A673 (cell line): ENCODE measurements at regions of chr10 and their contacts with region 1.

Region 1: GRCh38 chr10:66931340-66931948 is 5.6 kb downstream of the LRRTM3 start:
- DNase-seq: peak; percentile 64
- H3K4me3 ChIP-seq: no peak overlapping the region
- H3K27ac ChIP-seq: no peak overlapping the region
- H3K4me1 ChIP-seq: no peaks in the 10 kb centered on the region
- H3K27me3 ChIP-seq: peaks cover 41% of the 10 kb centered on the region
- CTCF ChIP-seq: peak; percentile 87

Region 2: DNA sequence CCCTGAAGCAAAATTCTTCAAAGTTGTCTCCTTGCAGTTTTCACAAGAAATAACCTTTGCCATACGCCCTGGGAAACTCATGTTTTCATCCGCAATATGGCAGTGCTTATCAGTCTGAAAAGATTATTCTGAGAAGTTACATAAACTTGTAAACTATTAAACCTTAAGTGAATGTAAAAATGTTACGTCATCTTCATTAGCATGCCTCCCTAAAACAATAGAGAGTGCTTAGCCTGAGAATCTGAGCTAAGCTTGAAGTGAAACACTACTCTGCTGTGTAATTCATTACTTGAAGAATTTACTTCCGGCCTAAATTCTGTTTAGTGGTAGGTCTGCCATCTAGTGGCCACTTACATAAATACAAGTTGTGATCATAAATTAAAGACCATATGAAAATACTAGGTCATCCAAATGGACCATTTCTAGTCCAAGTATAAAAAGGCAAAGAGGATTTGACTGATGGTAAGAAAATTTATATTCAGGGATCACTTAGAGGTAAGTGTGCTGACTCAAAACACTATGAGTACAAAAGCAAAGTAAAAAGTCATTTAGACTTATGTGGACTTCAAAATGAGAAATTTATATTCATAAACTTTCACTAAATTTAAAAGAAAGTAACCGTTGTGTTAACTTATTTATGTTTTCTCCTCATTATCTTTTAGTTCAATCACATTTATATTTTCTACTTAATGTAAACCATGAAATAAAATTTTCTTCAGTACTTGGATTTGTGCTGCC is 750.7 kb before region 1 on chr10:
- CTCF ChIA-PET with region 1: no interaction called
- POLR2A ChIA-PET with region 1: no interaction called
- intact Hi-C with region 1: loop called (anchors 5 kb)
- DNase-seq: peak; percentile 69
- H3K4me3 ChIP-seq: no peak overlapping the region
- H3K27ac ChIP-seq: no peak overlapping the region
- H3K4me1 ChIP-seq: no peaks in the 10 kb centered on the region
- H3K27me3 ChIP-seq: no peaks in the 10 kb centered on the region
- CTCF ChIP-seq: peak; percentile 66

Region 3: GRCh38 chr10:67520924-67521520 is 589.6 kb after region 1 on chr10:
- CTCF ChIA-PET with region 1: no interaction called
- POLR2A ChIA-PET with region 1: no interaction called
- intact Hi-C with region 1: loop called (anchors 5 kb)
- DNase-seq: peak; percentile 59
- H3K4me3 ChIP-seq: no peak overlapping the region
- H3K27ac ChIP-seq: no peak overlapping the region
- H3K4me1 ChIP-seq: no peaks in the 10 kb centered on the region
- H3K27me3 ChIP-seq: no peaks in the 10 kb centered on the region
- CTCF ChIP-seq: peak; percentile 88